ENCODE measurements at regions of chr11 and their contacts with region 1.

Region 1: DNA sequence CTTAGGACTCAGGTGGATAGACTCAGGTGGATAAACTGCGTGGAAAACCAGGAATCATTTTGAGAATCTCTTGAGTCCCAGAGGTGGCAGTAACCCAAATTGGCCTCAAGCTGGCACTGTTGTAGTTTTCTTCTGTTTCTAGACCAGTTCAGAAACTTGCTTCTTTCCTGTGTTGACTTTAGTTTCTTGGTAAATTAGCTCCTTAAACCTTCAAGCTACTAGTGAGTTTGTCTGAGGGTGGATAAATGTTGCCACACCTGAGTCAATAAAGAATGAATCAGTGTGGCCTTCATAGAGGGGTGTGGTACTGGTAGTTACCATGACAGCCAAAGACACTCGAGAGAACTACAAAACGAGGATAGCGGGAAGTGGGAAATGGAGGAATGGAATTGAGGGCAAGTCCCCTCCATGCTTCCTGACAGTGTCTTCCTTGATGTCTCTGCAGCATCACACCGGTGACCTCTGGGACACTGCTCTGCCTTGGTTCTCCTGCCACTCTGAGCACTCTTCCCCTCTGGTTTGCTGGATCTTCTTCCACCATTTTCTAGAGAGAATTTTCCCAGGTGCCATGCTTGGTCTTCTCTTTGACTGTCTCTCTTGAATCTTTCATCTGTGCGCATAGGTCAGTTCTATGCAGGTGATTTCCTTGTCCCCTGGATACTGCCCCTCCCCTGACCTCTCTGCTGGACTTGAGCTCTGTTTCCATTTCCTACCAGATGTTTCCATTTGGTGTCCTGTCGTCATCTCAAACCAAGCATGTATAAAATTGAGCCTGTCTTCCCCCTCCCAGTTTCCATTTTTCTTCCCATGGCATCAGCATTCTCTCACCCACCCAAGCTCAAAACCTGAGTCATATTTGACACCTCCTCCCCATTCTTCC is 7.2 kb downstream of the POLD4 start:
- DNase-seq: peak; percentile 82 to 87
- H3K4me3 ChIP-seq: no peak overlapping the region
- H3K4me3 Mint-ChIP-seq: peak overlapping the region; percentile 4
- H3K27ac Mint-ChIP-seq: peak overlapping the region; percentile 41
- H3K4me1 ChIP-seq: peaks cover 32% of the 10 kb centered on the region
- H3K4me1 Mint-ChIP-seq: peaks cover 35% of the 10 kb centered on the region
- H3K27me3 ChIP-seq: no peaks in the 10 kb centered on the region
- H3K27me3 Mint-ChIP-seq: no peaks in the 10 kb centered on the region
- CTCF ChIP-seq: peak; percentile 89 to 99

Region 2: DNA sequence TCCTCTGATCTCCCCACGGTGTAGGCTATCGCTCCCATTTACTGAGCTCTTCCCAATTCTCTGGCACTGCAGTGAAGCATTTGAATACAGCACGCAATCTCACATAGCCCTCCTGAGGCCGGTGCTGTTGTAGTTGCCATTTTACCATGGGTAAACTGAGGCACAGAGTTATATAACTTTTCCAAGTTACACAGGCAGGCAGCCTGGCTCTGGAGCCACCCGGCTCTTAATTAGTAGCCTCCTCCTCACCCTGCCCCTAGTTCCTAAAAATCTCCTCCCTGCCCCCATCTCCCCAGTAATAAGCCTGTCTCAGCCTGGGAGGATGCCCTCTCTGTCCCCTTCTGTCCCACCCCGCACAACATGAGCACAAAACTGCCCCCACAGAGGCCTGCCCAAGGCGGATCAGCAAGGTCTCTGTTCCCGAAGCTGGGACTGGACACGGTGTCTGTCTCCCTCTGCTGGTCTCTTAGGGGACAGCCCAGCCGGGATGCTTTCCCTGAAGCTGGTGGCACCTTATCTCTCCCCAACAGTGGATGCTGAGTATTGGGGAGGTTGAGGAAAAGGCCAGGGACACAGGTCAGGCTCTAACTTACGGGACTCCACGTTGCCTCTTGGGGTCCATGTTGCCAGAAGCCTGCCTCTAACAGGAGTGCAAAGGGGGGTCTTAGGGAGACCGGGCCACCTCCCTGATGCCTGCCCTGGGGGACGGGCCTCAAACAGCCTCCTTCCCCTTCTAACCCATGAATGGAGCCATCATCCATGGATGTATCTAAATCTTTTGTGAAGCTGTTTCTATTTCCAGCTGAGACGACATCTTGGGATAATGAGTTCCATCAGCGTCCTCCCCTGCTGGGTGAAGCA is 36.3 kb after region 1 on chr11:
- CTCF ChIA-PET with region 1: interaction called, 775 read pairs
- POLR2A ChIA-PET with region 1: interaction called, 8 read pairs
- intact Hi-C with region 1: loop called (anchors 1 kb)
- DNase-seq: peak; percentile 90 to 94
- H3K4me3 ChIP-seq: no peak overlapping the region
- H3K4me3 Mint-ChIP-seq: no peak overlapping the region
- H3K27ac Mint-ChIP-seq: no peak overlapping the region
- H3K4me1 ChIP-seq: peaks cover 14% of the 10 kb centered on the region
- H3K4me1 Mint-ChIP-seq: peaks cover 6% of the 10 kb centered on the region
- H3K27me3 ChIP-seq: 0 out of 2 replicates have a peak, but pooled peaks cover 3% of the 10 kb centered on the region
- H3K27me3 Mint-ChIP-seq: peaks cover 7% of the 10 kb centered on the region
- CTCF ChIP-seq: peak; percentile 99 to 100

Region 3: DNA sequence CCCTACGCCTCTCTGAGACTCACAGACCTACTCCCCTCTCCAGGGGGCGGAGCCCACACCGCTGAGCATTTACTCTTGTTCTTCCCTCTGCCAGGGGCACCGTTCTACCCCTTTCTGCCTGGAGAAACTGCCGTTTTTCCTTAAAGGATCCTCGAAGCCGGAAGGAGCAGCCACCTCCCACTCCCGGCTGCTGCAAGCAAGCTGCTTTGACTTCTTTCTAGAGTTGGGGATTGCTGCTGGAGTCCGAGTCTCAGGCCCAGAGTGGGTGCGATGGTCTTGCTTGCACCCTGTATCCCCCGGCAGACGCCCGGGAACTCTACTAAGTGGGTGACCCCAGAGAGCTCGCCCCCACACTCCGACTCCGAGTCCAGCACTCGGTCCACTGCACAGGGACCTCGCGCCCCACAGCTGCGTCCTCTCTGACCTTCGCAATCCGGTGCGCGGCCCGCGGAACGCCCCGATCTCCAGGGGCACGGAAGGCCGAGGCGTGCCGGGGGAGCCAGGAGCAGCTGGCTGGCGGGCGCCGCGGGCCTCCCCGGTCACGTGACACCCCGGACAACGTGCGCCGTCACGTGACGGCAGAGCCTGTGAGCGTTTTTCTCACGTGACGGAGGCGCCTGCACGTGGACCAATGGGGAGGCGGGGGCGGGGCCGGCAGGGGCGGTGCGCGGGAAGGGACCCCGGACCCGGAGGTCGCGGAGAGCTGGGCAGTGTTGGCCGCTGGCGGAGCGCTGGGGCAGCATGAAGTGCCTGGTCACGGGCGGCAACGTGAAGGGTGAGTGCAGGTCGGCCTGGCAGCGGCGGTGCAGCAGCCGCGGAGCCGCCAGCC is 45.4 kb after region 1 on chr11 and contains the start of gene RAD9A:
- CTCF ChIA-PET with region 1: interaction called, 775 read pairs
- POLR2A ChIA-PET with region 1: no interaction called
- intact Hi-C with region 1: no loop called
- DNase-seq: peak; percentile 98 to 99
- H3K4me3 ChIP-seq: peak within 1 kb of the TSS; percentile 80
- H3K4me3 Mint-ChIP-seq: peak within 1 kb of the TSS; percentile 76
- H3K27ac Mint-ChIP-seq: peak within 1 kb of the TSS; percentile 63
- H3K4me1 ChIP-seq: peaks cover 5% of the 10 kb centered on the region; the same call in 1 of the 2 replicates
- H3K4me1 Mint-ChIP-seq: peaks cover 23% of the 10 kb centered on the region
- H3K27me3 ChIP-seq: no peaks in the 10 kb centered on the region
- H3K27me3 Mint-ChIP-seq: no peaks in the 10 kb centered on the region
- CTCF ChIP-seq: no peak
- total RNA-seq, gene RAD9A: 55.1 and 63.5 TPM in 2 replicates

Measured in Caco-2 (cell line).